ENCODE measurements at regions of chr17 and their contacts with region 1.

Region 1: DNA sequence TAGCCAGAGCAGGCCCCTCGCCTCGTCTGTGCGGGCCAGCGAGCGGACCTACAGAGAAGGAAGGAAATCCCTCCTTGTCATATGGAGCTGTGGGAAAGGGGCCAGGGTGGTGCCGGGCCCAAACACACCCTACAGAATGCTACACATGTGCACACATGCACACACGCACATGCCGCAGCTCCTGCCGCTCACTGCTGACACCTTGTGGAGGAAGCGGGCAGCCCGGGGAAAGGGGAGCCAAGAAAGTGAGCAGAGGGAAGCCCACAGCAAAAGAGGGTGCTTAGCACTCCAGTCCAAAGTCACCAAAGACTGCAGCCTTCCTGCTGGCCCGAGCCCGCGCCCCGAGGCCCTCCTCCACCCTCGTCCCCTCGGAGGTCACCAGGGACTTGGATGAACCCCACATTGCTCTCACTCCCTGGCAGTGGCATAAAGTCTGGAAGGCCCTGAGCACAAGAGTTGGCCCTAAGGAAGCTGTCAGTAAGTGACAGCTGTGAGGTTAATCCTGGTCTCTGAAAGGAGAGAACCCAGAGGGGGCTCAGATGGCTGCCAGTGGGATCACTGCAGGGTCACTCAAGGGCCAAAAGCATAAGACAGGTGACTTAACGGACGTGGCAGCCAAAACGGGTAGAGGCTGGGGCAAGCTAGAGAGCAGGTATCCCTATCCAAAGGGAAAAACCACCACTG is 68.2 kb downstream of the MYO18A start:
- DNase-seq: peak; percentile 57 to 86 (median 68)
- ATAC-seq: peak; percentile 42 to 70 (median 60)
- H3K4me3 ChIP-seq: no peak overlapping the region
- H3K27ac ChIP-seq: peak overlapping the region in 10 of 12 donors; percentile 13 to 59 (median 48)
- H3K4me1 ChIP-seq: peaks cover 15 to 55% (median 37%) of the 10 kb centered on the region in 12 donors
- H3K27me3 ChIP-seq: no peaks in the 10 kb centered on the region
- CTCF ChIP-seq: peak; percentile 74 to 96 (median 89)
- POLR2A ChIP-seq: no peak

Region 2: DNA sequence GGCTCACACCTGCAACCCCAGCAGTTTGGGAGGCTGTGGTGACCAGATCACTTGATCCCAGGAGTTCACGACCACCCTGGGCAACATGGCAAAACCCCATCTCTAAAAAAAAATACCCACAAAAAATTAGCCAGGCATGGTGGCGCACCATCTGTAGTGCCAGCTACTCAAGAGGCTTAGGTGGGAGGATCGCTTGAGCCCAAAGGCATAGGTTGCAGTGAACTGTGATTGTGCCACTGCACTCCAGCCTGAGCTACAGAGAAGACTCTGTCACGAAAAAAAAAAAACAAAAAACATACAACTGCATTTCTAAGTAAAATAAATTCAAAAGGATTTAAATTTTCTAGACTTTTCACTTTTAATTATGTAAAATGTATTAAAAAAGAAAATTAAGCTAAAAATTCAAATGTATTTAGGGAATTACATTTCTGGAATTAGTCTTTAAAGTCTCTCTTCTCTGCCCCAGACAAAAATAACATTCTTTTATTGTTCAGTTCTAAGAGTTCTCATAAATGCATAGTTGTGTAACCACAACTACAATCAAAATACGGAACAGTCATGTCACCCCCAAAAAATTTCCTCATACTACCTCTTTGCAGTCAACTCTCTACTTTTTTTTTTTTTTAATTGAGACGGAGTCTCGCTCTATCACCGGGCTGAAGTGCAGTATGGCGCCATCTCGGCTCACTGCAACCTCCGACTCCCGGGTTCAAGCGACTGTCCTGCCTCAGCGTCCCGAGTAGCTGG is 283.5 kb before region 1 on chr17:
- intact Hi-C with region 1: no loop called
- DNase-seq: peak in 1 of 5 donors; percentile 19
- ATAC-seq: no peak
- H3K4me3 ChIP-seq: no peak overlapping the region
- H3K27ac ChIP-seq: no peak overlapping the region
- H3K4me1 ChIP-seq: peaks cover 0 to 6% (median 0%) of the 10 kb centered on the region in 12 donors
- H3K27me3 ChIP-seq: no peaks in the 10 kb centered on the region
- CTCF ChIP-seq: no peak
- POLR2A ChIP-seq: no peak

Region 3: DNA sequence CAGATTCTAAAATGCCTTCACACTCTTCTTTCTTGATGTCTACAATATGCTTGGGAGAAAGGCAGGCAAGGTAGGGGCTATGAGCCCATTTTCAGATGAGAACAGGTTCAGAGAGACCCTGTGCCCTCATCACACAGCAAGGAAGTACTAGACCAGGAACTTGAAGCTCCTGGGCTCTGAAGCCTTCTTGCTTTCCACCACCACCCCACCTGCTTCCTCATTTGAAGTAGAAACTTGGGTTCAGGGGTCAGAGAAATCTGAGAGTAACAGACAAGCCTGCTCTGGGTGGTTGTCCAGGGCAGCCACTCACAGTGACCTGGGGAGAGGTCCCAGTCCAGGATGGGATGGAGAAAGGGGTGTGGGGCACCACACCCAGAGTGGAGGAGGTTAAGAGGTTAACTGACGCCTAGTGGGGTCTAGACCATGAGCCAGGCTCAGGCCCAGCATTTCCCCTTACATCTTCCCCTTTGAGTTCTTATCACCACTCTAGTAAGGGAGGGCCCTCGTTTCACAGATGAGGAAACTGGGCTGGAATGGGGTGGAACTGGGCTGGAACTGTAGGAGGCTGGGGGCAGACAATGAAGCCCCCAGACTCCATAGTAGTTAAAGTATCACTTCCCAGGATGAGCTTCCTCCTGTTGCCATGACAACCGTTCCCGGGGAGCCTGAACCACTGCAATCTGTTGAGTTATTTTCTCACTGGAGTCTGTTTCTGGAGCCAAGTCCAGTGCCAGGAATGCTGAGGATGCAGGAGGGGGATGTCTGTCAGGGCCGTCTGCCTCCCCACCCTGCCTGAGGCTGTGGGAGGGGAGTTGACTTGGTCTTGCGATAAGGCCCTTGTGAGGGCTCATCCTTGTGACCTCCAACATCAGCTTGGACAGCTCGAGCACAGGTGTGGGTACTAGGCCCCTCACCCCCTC is 144.5 kb before region 1 on chr17:
- intact Hi-C with region 1: loop called (anchors 1 to 2 kb)
- DNase-seq: peak in 1 of 5 donors; percentile 37
- ATAC-seq: peak in 1 of 4 donors; percentile 3
- H3K4me3 ChIP-seq: no peak overlapping the region
- H3K27ac ChIP-seq: peak overlapping the region in 1 of 12 donors; percentile 69
- H3K4me1 ChIP-seq: peaks cover 0 to 42% (median 20%) of the 10 kb centered on the region in 12 donors
- H3K27me3 ChIP-seq: peaks cover 0 to 8% (median 0%) of the 10 kb centered on the region in 9 donors
- CTCF ChIP-seq: no peak
- POLR2A ChIP-seq: no peak

Region 4: DNA sequence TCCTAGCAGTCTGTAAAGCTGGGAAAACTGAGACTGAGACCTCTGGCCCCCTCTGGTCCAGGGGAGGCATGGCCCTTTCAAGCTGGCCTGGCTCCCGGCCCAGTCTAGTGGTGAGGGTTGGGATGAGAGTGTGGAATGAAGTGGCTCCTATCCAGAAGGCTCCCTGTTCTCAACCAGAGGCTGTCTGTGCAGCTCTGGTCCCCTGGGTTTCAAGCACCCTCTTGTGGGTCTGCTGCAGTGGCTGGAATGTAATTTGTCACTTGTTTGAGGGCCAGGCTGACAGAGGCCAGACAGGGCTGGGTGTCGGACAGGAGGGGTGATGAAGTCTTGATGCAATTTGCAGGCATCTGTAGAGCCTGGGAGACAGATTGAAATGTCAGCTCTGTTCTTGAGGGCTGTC is 138.5 kb before region 1 on chr17:
- intact Hi-C with region 1: loop called in 3 of 10 experiments (anchors 2 kb)
- DNase-seq: peak; percentile 78 to 93 (median 87)
- ATAC-seq: peak; percentile 82 to 89 (median 87)
- H3K4me3 ChIP-seq: no peak overlapping the region
- H3K27ac ChIP-seq: peak overlapping the region in 8 of 12 donors; percentile 16 to 86 (median 78)
- H3K4me1 ChIP-seq: peaks cover 2 to 55% (median 30%) of the 10 kb centered on the region in 12 donors
- H3K27me3 ChIP-seq: no peaks in the 10 kb centered on the region
- CTCF ChIP-seq: peak in 5 of 12 donors; percentile 10 to 31 (median 15)
- POLR2A ChIP-seq: no peak

Region 5: DNA sequence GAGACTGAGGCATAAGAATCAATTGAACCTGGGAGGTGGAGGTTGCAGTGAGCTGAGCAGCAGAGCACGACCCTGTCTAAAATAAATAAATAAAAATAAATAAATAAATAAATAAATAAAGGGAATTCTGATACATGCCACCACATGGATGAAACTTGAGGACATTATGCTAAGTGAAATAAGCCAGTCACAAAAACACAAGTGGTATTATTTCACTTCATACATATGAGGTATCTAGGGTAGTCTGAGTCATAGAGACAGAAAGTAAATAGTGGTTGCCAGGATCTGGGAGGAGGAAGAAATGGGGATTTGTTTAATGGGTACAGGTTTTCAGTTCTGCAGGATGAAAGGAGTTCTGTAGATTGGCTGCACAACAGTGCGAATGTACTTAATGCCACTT is 52.7 kb before region 1 on chr17:
- intact Hi-C with region 1: loop called in 1 of 10 experiments (anchors 10 kb)
- DNase-seq: no peak
- ATAC-seq: no peak
- H3K4me3 ChIP-seq: no peak overlapping the region
- H3K27ac ChIP-seq: no peak overlapping the region
- H3K4me1 ChIP-seq: peaks cover 0 to 16% (median 5%) of the 10 kb centered on the region in 12 donors
- H3K27me3 ChIP-seq: peaks cover 0 to 3% (median 0%) of the 10 kb centered on the region in 9 donors
- CTCF ChIP-seq: no peak
- POLR2A ChIP-seq: no peak

Region 6: GRCh38 chr17:29078183-29079045 is 33.5 kb before region 1 on chr17:
- intact Hi-C with region 1: loop called in 1 of 10 experiments (anchors 5 kb)
- DNase-seq: peak in 2 of 5 donors; percentile 55 to 71
- ATAC-seq: peak in 3 of 4 donors; percentile 18 to 70 (median 54)
- H3K4me3 ChIP-seq: no peak overlapping the region
- H3K27ac ChIP-seq: peak overlapping the region in 3 of 12 donors; percentile 0 to 38 (median 22)
- H3K4me1 ChIP-seq: peaks cover 0 to 38% (median 12%) of the 10 kb centered on the region in 12 donors
- H3K27me3 ChIP-seq: no peaks in the 10 kb centered on the region
- CTCF ChIP-seq: no peak
- POLR2A ChIP-seq: no peak

Region 7: DNA sequence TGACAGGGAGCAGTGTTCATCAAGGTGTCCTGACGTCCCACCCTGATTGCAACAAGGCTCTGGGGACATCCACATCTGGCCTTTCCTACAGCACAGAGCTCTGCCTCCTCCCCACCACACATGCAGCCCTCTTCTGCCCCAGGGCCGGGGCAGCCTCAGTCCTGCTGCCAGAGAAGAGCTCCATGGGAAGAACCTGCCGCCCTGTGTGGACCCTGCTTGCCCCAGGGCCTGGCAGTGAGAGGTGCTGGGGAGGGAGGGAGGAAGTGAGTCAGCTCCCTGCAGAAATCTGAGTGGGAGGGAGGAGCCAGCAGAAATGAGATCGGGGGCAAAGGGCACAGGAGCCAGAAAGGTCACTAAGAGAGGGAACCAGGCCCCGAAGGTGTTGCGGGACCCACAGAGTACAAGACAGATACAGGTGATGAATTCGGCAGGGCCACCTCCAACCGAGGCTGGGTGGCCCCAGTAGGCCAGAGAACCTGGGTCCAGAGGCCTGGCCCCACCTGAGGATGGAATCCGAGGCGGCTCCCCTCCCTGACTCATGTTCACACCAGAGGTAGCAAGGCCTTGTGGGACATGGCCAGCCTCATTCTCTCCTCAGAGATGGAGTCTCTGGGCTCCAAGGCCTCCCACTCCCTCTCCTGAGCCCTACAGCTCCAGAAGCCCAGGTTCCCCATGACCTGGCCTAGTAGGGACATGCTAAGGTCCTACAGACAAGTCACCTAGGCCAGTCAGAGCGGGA is 43.4 kb after region 1 on chr17:
- intact Hi-C with region 1: no loop called
- DNase-seq: peak in 3 of 5 donors; percentile 51 to 78 (median 60)
- ATAC-seq: peak; percentile 40 to 78 (median 70)
- H3K4me3 ChIP-seq: peak overlapping the region in 1 of 12 donors; percentile 24
- H3K27ac ChIP-seq: peak overlapping the region in 11 of 12 donors; percentile 51 to 83 (median 73)
- H3K4me1 ChIP-seq: peaks cover 16 to 87% (median 59%) of the 10 kb centered on the region in 12 donors
- H3K27me3 ChIP-seq: no peaks in the 10 kb centered on the region
- CTCF ChIP-seq: no peak
- POLR2A ChIP-seq: peak in 1 of 2 donors; percentile 34

Region 8: GRCh38 chr17:29168079-29168758 is 56.3 kb after region 1 on chr17:
- intact Hi-C with region 1: no loop called
- DNase-seq: peak in 2 of 5 donors; percentile 35 to 60
- ATAC-seq: peak in 3 of 4 donors; percentile 48 to 63 (median 50)
- H3K4me3 ChIP-seq: no peak overlapping the region
- H3K27ac ChIP-seq: peak overlapping the region in 4 of 12 donors; percentile 13 to 45 (median 28)
- H3K4me1 ChIP-seq: peaks cover 0 to 41% (median 24%) of the 10 kb centered on the region in 12 donors
- H3K27me3 ChIP-seq: no peaks in the 10 kb centered on the region
- CTCF ChIP-seq: no peak
- POLR2A ChIP-seq: no peak